ENCODE measurements at regions of chr11 and their contacts with region 1.

Region 1: DNA sequence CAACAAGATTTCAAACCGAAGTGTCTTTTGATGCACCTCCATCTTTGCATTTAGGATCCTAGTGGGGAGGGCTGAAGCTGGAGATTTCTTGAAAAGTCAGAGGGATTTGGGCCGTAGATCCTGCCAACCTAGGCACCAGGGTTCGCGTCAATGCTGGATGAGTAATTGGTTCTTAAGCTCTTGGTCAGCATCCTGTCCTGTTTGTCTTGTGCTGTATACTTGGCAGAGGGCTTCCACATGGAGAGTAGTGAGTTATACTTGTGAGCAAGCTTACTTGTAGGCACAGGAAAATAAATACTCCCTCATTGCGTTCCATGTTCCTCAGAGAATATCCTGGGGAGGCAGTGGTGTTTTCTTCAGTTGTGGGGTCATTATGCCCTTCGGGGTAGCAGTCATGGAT is 12.6 kb downstream of the INSC start:
- DNase-seq: no peak
- H3K4me3 ChIP-seq: no peak overlapping the region
- H3K27me3 ChIP-seq: no peaks in the 10 kb centered on the region
- CTCF ChIP-seq: no peak

Region 2: GRCh38 chr11:15107730-15108515 is 19.4 kb before region 1 on chr11:
- CTCF ChIA-PET with region 1: no interaction called
- POLR2A ChIA-PET with region 1: no interaction called
- DNase-seq: no peak
- H3K4me3 ChIP-seq: no peak overlapping the region
- H3K27me3 ChIP-seq: no peaks in the 10 kb centered on the region
- CTCF ChIP-seq: no peak

Region 3: DNA sequence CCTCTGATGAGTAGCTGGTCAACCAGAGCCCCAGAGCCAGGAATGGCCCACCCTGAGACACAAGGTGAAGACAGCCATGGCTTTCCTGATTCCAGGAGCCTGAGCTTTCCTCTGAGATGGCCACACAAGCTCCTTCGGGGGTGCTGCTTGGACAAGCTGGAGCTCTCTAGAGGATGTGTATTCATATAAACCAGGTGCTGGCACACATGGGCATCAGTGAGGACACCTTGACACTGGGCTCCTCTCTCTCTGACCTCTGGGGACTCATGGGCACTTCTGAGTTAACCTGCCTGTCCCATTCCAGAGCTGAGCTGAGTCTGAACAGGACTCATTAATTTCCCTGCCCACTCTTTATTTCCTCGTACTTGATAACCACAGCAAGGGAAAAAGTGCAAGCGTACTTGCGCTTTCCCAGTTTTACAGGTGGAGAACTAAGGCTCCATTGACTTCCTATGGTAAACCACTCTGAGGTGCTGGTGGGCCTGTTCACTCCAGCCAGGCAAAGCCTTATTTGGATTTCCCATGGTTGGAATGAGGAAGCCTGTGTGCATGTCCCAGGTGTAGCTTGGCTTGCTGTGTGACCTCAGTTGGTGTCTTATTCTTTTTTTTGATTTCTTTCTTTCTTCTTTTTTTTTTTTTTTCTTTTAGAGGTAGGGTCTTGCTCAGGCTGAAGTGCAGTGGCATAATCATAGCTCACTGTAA is 12.8 kb after region 1 on chr11:
- CTCF ChIA-PET with region 1: interaction called, 12 read pairs
- POLR2A ChIA-PET with region 1: no interaction called
- DNase-seq: no peak
- H3K4me3 ChIP-seq: no peak overlapping the region
- H3K27me3 ChIP-seq: no peaks in the 10 kb centered on the region
- CTCF ChIP-seq: no peak

Region 4: GRCh38 chr11:15248749-15249148 is 121.4 kb after region 1 on chr11:
- CTCF ChIA-PET with region 1: no interaction called
- POLR2A ChIA-PET with region 1: no interaction called
- DNase-seq: no peak
- H3K4me3 ChIP-seq: no peak overlapping the region
- H3K27me3 ChIP-seq: no peaks in the 10 kb centered on the region
- CTCF ChIP-seq: no peak